GM13976 (cell line): ENCODE measurements at regions of chrX and their contacts with region 1.

Region 1: DNA sequence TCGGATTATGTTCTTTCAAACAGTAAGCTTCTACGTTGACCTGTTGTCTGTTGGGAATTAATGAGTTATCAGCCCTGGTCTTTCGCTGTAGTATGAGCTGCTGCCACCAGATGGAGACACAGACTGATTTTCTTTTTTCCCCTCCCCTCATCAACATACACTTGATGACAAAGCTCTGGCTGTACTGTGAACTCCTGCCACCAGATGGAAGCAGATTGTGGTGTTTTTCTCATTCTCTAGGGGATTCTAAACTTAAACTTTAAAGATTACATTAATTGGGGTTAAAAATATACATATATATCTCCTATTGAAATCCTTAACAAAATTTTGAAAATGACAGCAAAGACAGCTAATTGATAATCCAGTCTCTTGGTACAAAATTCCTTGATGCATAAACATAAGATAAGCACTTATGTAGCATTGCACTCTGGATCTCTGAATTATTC is 44.8 kb downstream of the SMS start:
- DNase-seq: peak; percentile 73
- CTCF ChIP-seq: peak; percentile 71

Region 2: GRCh38 chrX:22192417-22193060 is 207.2 kb after region 1 on chrX:
- in situ Hi-C with region 1: loop called (anchors 25 kb)
- DNase-seq: peak; percentile 38
- CTCF ChIP-seq: peak; percentile 92

Region 3: DNA sequence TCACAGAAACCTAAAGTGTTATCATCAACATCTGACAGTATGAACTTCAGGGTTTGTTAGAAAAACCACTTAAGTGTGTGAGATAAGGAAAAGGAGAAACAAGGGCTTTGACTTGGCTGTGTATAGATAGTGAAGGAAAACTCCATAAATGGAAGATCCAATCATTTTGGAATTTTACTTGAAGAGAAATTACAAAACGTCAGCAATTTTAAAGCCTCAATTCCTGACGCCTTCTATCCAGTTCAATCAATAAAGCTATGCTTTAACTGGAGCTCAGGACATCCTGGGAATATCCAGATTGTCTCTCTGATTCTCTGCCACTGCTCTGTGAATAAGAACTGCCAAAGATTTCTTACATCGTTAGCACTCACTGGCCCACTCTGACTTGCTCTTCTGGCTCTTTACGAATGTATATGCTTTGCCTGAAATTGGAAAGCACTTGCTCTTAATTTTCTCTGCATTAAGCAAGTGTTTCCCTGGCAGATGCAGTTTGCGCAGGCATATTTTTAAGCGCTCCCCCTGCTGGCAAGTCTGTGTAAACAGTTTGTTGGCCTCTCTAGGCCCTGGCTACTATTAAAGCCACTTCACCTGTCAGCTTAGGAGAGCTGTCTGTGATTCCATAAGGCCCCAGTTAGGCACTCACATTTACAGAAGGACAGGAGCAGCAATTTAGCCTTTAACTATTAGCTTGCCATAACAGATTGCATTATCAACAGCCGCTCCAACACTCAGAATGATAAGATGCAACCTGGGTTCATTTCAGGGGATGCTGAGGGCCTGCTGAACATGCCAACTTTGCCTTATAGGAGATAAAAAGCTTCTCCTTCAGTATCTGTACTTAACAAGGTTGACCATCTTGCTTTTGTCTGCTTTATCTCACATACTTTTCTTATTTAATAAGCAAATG is 763.0 kb after region 1 on chrX:
- in situ Hi-C with region 1: loop called (anchors 10 kb)
- DNase-seq: peak; percentile 36
- CTCF ChIP-seq: peak; percentile 81